ENCODE measurements at regions of chr3 and their contacts with region 1.

Region 1: GRCh38 chr3:29668728-29669127 is 387.9 kb downstream of the RBMS3 start:
- DNase-seq: no peak
- H3K4me3 ChIP-seq: no peak overlapping the region
- H3K27ac ChIP-seq: no peak overlapping the region
- H3K4me1 ChIP-seq: no peaks in the 10 kb centered on the region
- H3K27me3 ChIP-seq: no peaks in the 10 kb centered on the region
- CTCF ChIP-seq: peak; percentile 13 to 25

Region 2: GRCh38 chr3:29705906-29706844 is 37.4 kb after region 1 on chr3:
- CTCF ChIA-PET with region 1: no interaction called
- dilution Hi-C with region 1: loop called (anchors 5 kb)
- in situ Hi-C with region 1: no loop called
- intact Hi-C with region 1: no loop called
- DNase-seq: no peak
- H3K4me3 ChIP-seq: no peak overlapping the region
- H3K27ac ChIP-seq: no peak overlapping the region
- H3K4me1 ChIP-seq: no peaks in the 10 kb centered on the region
- H3K27me3 ChIP-seq: no peaks in the 10 kb centered on the region
- CTCF ChIP-seq: no peak